PC-3 (cell line): ENCODE measurements at regions of chr13 and their contacts with region 1.

Region 1: DNA sequence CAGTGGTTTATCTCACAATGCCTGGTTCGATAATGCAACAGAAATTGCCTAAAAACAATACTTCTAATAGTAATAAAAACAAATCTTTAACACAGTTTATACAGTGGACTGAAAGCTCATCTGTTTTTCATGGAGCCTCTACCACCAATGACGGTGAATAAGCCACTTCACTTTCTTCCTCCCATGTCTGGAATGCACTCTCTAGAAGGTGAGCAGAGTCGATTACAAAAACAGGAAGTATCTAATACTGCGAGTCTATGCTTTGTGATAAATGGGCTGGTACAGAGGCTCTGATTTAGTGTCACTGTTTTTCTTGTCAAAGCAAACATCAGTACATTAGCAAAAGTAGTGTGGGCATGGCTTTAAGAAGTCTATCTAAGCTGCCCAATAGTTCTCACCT is 1348.6 kb upstream of the SLC10A2 start:
- DNase-seq: no peak
- ATAC-seq: no peak
- H3K4me3 ChIP-seq: no peak overlapping the region
- H3K27ac ChIP-seq: no peak overlapping the region
- H3K4me1 ChIP-seq: no peaks in the 10 kb centered on the region
- H3K27me3 ChIP-seq: no peaks in the 10 kb centered on the region
- CTCF ChIP-seq: no peak

Region 2: DNA sequence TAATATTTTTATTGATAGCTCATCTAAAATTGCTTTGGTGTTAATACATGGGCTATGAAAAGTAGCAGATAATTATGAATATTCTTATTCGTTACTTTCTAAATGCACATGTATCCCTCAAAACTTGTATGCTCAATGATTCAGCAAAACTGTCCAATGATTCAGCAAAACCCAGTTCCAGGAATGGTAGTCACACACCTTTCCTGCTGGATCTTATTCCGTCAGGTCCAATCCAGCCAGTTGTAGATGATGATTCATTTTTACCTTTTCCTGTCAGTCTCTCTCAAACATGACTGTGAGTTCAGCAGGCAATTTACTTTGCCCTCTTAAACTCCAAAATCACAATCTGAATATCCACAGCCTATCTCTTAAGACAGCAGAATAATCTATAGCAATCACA is 1038.1 kb after region 1 on chr13:
- CTCF ChIA-PET with region 1: no interaction called
- POLR2A ChIA-PET with region 1: interaction called, 16 read pairs
- intact Hi-C with region 1: no loop called
- DNase-seq: peak; percentile 71
- ATAC-seq: peak; percentile 40; the same call in 1 of the 2 replicates
- H3K4me3 ChIP-seq: no peak overlapping the region
- H3K27ac ChIP-seq: peak overlapping the region; percentile 69
- H3K4me1 ChIP-seq: peaks cover 5% of the 10 kb centered on the region; the same call in 1 of the 2 replicates
- H3K27me3 ChIP-seq: no peaks in the 10 kb centered on the region
- CTCF ChIP-seq: no peak